ENCODE measurements at regions of chr16 and their contacts with region 1.

Region 1: DNA sequence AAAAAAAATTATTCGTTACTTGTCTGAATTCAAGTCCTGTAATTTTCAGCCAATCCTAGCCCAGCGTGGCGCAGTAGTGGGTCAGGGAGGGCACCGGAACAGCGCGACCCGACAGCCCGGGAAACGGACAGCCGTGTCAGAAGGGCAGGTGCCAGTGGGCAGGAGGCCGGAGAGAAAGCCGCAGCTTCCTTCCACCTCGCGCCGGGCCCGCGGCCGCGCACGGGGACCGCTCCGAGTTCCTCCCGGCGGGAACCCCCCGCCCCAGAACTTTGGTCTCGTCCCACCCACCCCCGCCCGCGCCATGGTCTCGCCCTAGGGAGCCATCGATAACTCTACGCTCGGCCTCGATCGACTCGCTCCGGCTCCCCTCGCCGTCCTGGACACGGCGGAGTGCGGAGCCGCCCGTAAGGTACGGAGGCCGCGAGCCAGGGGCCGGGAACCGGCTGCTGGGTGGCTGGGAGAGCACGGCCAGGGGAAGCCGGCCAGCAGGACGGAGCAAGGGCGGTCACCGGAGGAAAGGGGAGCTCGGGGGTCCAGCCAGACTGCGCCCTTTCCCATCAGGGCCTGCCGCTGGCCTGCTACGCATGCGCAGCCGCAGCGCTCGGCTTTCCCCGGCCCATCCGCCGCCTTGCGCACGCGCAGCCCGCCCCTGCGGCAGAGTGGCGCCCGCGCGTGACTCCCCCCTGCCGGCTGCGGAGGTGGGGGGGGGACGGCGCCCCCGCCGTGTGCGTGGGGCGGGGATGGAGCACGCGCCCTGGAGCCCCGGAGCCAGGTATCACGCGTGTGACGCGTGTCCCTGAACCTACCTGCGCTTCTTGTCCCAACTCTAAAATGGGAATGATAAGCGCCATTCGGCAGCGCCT is at the start of gene MLST8:
- DNase-seq: peak; percentile 89 to 96 (median 96)
- ATAC-seq: peak; percentile 84 to 85
- H3K4me3 ChIP-seq: peak within 1 kb of the TSS; percentile 77
- H3K27ac ChIP-seq: peak within 1 kb of the TSS; percentile 99
- H3K4me1 ChIP-seq: peaks cover 7% of the 10 kb centered on the region
- H3K27me3 ChIP-seq: no peaks in the 10 kb centered on the region
- total RNA-seq, gene MLST8: 24.2 to 29.3 (median 27.0) TPM

Region 2: GRCh38 chr16:2155091-2156021 is 50.0 kb before region 1 on chr16 and contains the start of gene TRAF7:
- intact Hi-C with region 1: loop called in 1 of 4 experiments (anchors 10 kb)
- DNase-seq: peak; percentile 99
- ATAC-seq: peak; percentile 91 to 94
- H3K4me3 ChIP-seq: peak within 1 kb of the TSS; percentile 83
- H3K27ac ChIP-seq: peak within 1 kb of the TSS; percentile 65
- H3K4me1 ChIP-seq: peaks cover 13% of the 10 kb centered on the region
- H3K27me3 ChIP-seq: no peaks in the 10 kb centered on the region
- total RNA-seq, gene TRAF7: 26.1 to 39.2 (median 33.0) TPM

Measured in right cardiac atrium (tissue), 5 donors.